ENCODE measurements at regions of chr15 and their contacts with region 1.

Region 1: DNA sequence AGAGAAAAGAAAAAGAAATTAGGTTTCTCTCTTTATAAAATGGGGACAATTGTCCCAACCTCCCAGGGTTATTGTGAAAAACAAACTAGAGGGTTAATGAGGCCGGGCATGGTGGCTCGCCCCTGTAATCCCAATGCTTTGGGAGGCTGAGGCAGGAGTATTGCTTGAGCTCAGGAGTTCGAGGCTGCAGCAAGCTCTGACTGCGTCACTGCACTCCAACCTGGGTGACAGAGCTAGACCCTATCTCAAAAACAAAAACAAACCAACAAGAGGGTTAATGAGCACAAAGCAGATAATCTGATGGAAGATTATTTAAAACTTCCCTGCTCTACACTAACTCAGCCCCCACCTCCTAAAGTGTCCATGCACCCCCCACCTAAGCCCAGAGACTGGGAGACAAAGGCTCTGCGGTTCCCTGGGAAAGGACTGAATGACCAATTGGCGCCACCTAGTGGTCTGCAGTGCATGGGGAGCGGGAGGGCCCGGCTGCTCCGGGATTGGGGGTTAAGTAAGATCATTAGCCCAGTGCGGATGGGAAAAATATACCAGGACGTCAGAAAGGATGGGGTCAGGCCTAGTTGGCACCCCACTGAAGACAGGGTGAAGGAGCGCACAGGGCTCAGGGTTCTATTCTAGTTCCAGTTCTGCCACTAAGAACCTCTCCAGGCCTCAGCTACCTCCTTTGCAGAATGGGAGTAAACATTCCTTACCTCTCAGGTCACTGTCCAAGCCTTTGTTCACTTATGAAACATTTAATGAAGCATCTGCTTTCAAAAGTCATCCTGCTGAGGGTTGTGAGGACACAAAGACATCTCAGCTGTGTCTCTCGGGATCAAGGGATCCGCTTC is 15.6 kb downstream of the PIF1 start:
- DNase-seq: no peak
- H3K4me3 ChIP-seq: no peak overlapping the region
- H3K27ac ChIP-seq: no peak overlapping the region
- H3K4me1 ChIP-seq: peaks cover 5% of the 10 kb centered on the region
- H3K27me3 ChIP-seq: no peaks in the 10 kb centered on the region
- CTCF ChIP-seq: peak; percentile 79 to 89 (median 80)
- POLR2A ChIP-seq: no peak

Region 2: GRCh38 chr15:64536244-64536836 is 273.5 kb before region 1 on chr15:
- intact Hi-C with region 1: no loop called
- DNase-seq: no peak
- H3K4me3 ChIP-seq: no peak overlapping the region
- H3K27ac ChIP-seq: no peak overlapping the region
- H3K4me1 ChIP-seq: peaks cover 29% of the 10 kb centered on the region
- H3K27me3 ChIP-seq: no peaks in the 10 kb centered on the region
- CTCF ChIP-seq: no peak
- POLR2A ChIP-seq: no peak

Region 3: DNA sequence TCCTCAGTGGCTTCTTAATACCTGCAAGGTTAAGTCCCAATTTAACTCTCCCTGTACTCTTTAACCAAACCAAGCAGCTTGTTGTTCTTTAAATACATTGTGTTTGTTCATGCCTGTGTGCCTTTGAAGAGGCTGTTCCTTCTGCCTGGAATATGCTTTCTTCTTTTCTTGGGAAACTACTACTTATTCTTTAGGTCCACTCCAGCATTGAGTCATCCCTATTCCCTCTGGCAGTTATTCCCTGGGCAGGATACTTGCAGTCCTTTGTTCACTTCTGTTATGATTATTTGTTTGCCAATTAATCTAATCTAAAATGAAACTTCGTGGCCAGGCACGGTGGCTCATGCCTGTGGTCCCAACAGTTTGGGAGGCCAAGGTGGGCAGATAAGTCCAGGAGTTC is 210.2 kb before region 1 on chr15:
- intact Hi-C with region 1: no loop called
- DNase-seq: no peak
- H3K4me3 ChIP-seq: no peak overlapping the region
- H3K27ac ChIP-seq: no peak overlapping the region
- H3K4me1 ChIP-seq: peaks cover 45% of the 10 kb centered on the region
- H3K27me3 ChIP-seq: no peaks in the 10 kb centered on the region
- CTCF ChIP-seq: no peak
- POLR2A ChIP-seq: no peak

Region 4: DNA sequence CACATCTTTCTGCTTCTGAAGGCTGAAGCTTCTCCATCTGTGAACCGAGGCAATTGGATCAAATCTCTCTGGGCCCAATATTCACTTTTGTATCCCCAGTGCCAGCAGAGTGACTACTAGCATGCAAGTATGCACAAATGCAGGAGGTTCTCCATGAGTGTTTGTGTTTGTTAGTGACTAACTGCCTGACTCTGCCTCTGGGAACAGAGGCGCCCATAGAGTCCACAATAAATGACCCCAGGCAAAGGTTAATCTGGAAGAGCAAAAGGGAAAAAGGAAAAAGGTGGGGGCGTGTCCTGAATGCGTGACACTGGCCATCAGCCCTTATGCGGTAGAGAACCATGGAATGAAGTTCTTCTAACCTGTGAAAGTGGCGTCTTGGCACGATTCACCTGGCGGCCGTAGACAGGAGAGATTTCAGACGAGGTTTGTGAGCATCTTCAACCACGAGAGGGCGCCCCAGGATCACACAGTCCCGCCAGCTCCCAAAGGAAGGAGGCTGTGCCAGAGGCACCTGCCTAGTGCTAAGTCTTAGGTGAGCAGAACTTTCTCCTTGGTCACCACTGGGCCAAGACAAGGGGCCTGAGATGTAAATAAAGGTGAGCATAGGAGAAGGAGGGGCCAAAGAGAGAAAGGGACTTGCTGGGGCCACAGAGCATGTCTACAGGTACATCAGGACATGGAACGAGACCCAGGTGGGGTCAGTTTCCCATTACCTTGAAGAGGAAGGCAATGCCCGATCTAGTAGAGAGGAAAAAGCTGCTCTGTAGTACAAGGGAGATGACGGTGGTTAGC is 78.7 kb before region 1 on chr15:
- intact Hi-C with region 1: loop called (anchors 2 kb)
- DNase-seq: no peak
- H3K4me3 ChIP-seq: no peak overlapping the region
- H3K27ac ChIP-seq: no peak overlapping the region
- H3K4me1 ChIP-seq: no peaks in the 10 kb centered on the region
- H3K27me3 ChIP-seq: no peaks in the 10 kb centered on the region
- CTCF ChIP-seq: peak; percentile 78 to 94 (median 91)
- POLR2A ChIP-seq: no peak

Region 5: GRCh38 chr15:64749999-64750657 is 59.7 kb before region 1 on chr15:
- intact Hi-C with region 1: loop called (anchors 5 kb)
- DNase-seq: no peak
- H3K4me3 ChIP-seq: no peak overlapping the region
- H3K27ac ChIP-seq: no peak overlapping the region
- H3K4me1 ChIP-seq: no peaks in the 10 kb centered on the region
- H3K27me3 ChIP-seq: no peaks in the 10 kb centered on the region
- CTCF ChIP-seq: no peak
- POLR2A ChIP-seq: no peak

Region 6: GRCh38 chr15:64767203-64767602 is 42.7 kb before region 1 on chr15:
- intact Hi-C with region 1: no loop called
- DNase-seq: no peak
- H3K4me3 ChIP-seq: no peak overlapping the region
- H3K27ac ChIP-seq: no peak overlapping the region
- H3K4me1 ChIP-seq: no peaks in the 10 kb centered on the region
- H3K27me3 ChIP-seq: no peaks in the 10 kb centered on the region
- CTCF ChIP-seq: no peak
- POLR2A ChIP-seq: no peak

Measured in vagina (tissue), 2 donors.